Activated CD4-positive, alpha-beta T cell treated with anti-CD3 and anti-CD28 coated beads for 36 hours (primary cell): ENCODE measurements at regions of chr15 and their contacts with region 1.

Region 1: GRCh38 chr15:44066316-44066740 is 128.7 kb downstream of the FRMD5 start:
- DNase-seq: peak; percentile 80
- ATAC-seq: peak; percentile 68
- H3K4me3 Mint-ChIP-seq: no peak overlapping the region
- H3K27ac Mint-ChIP-seq: no peak overlapping the region
- H3K4me1 Mint-ChIP-seq: peaks cover 4% of the 10 kb centered on the region
- H3K27me3 Mint-ChIP-seq: peaks cover 14% of the 10 kb centered on the region

Region 2: GRCh38 chr15:43749690-43750345 is 316.5 kb before region 1 on chr15:
- CTCF ChIA-PET with region 1: no interaction called
- POLR2A ChIA-PET with region 1: no interaction called
- intact Hi-C with region 1: no loop called
- DNase-seq: peak; percentile 69
- ATAC-seq: peak; percentile 46
- H3K4me3 Mint-ChIP-seq: peak overlapping the region; percentile 92
- H3K27ac Mint-ChIP-seq: peak overlapping the region; percentile 82
- H3K4me1 Mint-ChIP-seq: peaks cover 45% of the 10 kb centered on the region
- H3K27me3 Mint-ChIP-seq: no peaks in the 10 kb centered on the region

Region 3: GRCh38 chr15:43903864-43904290 is 162.5 kb before region 1 on chr15:
- CTCF ChIA-PET with region 1: interaction called, 51 read pairs
- POLR2A ChIA-PET with region 1: no interaction called
- intact Hi-C with region 1: loop called (anchors 1 kb)
- DNase-seq: peak; percentile 72
- ATAC-seq: peak; percentile 83
- H3K4me3 Mint-ChIP-seq: no peak overlapping the region
- H3K27ac Mint-ChIP-seq: no peak overlapping the region
- H3K4me1 Mint-ChIP-seq: peaks cover 2% of the 10 kb centered on the region
- H3K27me3 Mint-ChIP-seq: no peaks in the 10 kb centered on the region

Region 4: GRCh38 chr15:43939070-43939469 is 127.3 kb before region 1 on chr15:
- CTCF ChIA-PET with region 1: interaction called, 7 read pairs
- POLR2A ChIA-PET with region 1: no interaction called
- intact Hi-C with region 1: loop called (anchors 2 to 5 kb)
- DNase-seq: peak; percentile 33
- ATAC-seq: no peak
- H3K4me3 Mint-ChIP-seq: no peak overlapping the region
- H3K27ac Mint-ChIP-seq: no peak overlapping the region
- H3K4me1 Mint-ChIP-seq: no peaks in the 10 kb centered on the region
- H3K27me3 Mint-ChIP-seq: peaks cover 9% of the 10 kb centered on the region